CD8-positive, alpha-beta T cell (primary cell): ENCODE measurements at regions of chr17 and their contacts with region 1.

Region 1: DNA sequence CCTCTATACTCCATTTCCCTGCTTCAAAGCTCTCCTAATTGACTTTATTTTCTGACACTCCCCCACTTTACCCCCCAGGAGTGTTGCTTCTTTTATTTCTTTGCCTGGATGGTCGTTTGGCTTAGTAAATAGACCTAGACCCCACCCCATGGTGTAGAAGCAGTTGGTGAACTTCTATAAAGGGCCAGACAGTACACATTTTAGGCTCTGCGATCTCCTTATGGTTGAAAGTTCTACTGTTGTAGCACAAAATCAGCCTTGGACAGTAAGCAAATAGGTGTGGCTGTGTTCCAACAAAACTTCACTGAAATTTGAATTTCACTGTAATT is 31.9 kb downstream of the ZNF287 start:
- DNase-seq: no peak
- ATAC-seq: no peak
- H3K4me3 ChIP-seq: no peak overlapping the region
- H3K4me3 Mint-ChIP-seq: peak overlapping the region; percentile 96
- H3K27ac ChIP-seq: peak overlapping the region in 1 of 2 experiments; percentile 45
- H3K27ac Mint-ChIP-seq: peak overlapping the region; percentile 96
- H3K4me1 ChIP-seq: peaks cover 9% of the 10 kb centered on the region
- H3K4me1 Mint-ChIP-seq: peaks cover 21% of the 10 kb centered on the region
- H3K27me3 ChIP-seq: no peaks in the 10 kb centered on the region
- H3K27me3 Mint-ChIP-seq: peaks cover 2% of the 10 kb centered on the region
- CTCF ChIP-seq: no peak

Region 2: GRCh38 chr17:16285957-16286640 is 251.0 kb before region 1 on chr17:
- CTCF ChIA-PET with region 1: no interaction called
- POLR2A ChIA-PET with region 1: interaction called, 3 read pairs
- intact Hi-C with region 1: loop called in 1 of 2 experiments (anchors 1 kb)
- DNase-seq: peak; percentile 48 to 91 (median 77)
- ATAC-seq: peak; percentile 93
- H3K4me3 ChIP-seq: peak overlapping the region; percentile 19 to 27
- H3K4me3 Mint-ChIP-seq: peak overlapping the region; percentile 75
- H3K27ac ChIP-seq: peak overlapping the region; percentile 60 to 86
- H3K27ac Mint-ChIP-seq: peak overlapping the region; percentile 99
- H3K4me1 ChIP-seq: peaks cover 49% of the 10 kb centered on the region
- H3K4me1 Mint-ChIP-seq: peaks cover 53% of the 10 kb centered on the region
- H3K27me3 ChIP-seq: no peaks in the 10 kb centered on the region
- H3K27me3 Mint-ChIP-seq: no peaks in the 10 kb centered on the region
- CTCF ChIP-seq: peak; percentile 37

Region 3: DNA sequence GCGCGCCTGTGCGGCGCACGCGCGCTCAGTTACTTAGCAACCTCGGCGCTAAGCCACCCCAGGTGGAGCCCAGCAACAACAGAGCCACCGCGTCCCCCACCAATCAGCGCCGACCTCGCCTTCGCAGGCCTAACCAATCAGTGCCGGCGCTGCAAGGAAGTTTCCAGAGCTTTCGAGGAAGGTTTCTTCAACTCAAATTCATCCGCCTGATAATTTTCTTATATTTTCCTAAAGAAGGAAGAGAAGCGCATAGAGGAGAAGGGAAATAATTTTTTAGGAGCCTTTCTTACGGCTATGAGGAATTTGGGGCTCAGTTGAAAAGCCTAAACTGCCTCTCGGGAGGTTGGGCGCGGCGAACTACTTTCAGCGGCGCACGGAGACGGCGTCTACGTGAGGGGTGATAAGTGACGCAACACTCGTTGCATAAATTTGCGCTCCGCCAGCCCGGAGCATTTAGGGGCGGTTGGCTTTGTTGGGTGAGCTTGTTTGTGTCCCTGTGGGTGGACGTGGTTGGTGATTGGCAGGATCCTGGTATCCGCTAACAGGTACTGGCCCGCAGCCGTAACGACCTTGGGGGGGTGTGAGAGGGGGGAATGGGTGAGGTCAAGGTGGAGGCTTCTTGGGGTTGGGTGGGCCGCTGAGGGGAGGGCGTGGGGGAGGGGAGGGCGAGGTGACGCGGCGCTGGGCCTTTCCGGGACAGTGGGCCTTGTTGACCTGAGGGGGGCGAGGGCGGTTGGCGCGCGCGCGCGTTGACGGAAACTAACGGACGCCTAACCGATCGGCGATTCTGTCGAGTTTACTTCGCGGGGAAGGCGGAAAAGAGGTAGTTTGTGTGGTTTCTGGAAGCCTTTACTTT is 156.2 kb before region 1 on chr17 and contains the start of gene UBB:
- CTCF ChIA-PET with region 1: no interaction called
- POLR2A ChIA-PET with region 1: interaction called, 12 read pairs
- intact Hi-C with region 1: loop called (anchors 1 kb)
- DNase-seq: peak; percentile 88 to 99 (median 94)
- ATAC-seq: peak; percentile 91
- H3K4me3 ChIP-seq: peak within 1 kb of the TSS; percentile 77 to 79
- H3K4me3 Mint-ChIP-seq: peak within 1 kb of the TSS; percentile 85
- H3K27ac ChIP-seq: peak within 1 kb of the TSS; percentile 89 to 99
- H3K27ac Mint-ChIP-seq: peak within 1 kb of the TSS; percentile 96
- H3K4me1 ChIP-seq: peaks cover 29% of the 10 kb centered on the region
- H3K4me1 Mint-ChIP-seq: peaks cover 36% of the 10 kb centered on the region
- H3K27me3 ChIP-seq: no peaks in the 10 kb centered on the region
- H3K27me3 Mint-ChIP-seq: no peaks in the 10 kb centered on the region
- CTCF ChIP-seq: no peak
- total RNA-seq, gene UBB: 829 to 863 TPM

Region 4: GRCh38 chr17:16491703-16492612 is 45.1 kb before region 1 on chr17 and contains the start of gene LRRC75A:
- CTCF ChIA-PET with region 1: no interaction called
- POLR2A ChIA-PET with region 1: no interaction called
- intact Hi-C with region 1: loop called (anchors 1 kb)
- DNase-seq: peak; percentile 18 to 83 (median 50)
- ATAC-seq: peak; percentile 88
- H3K4me3 ChIP-seq: peak within 1 kb of the TSS; percentile 50 to 56
- H3K4me3 Mint-ChIP-seq: peak within 1 kb of the TSS; percentile 84
- H3K27ac ChIP-seq: no peak within 1 kb of the TSS
- H3K27ac Mint-ChIP-seq: peak within 1 kb of the TSS; percentile 55
- H3K4me1 ChIP-seq: peaks cover 19% of the 10 kb centered on the region
- H3K4me1 Mint-ChIP-seq: peaks cover 19% of the 10 kb centered on the region
- H3K27me3 ChIP-seq: no peaks in the 10 kb centered on the region
- H3K27me3 Mint-ChIP-seq: no peaks in the 10 kb centered on the region
- CTCF ChIP-seq: no peak
- total RNA-seq, gene LRRC75A: 1.7 TPM

Region 5: GRCh38 chr17:16589097-16589969 is 52.2 kb after region 1 on chr17:
- CTCF ChIA-PET with region 1: interaction called, 75 read pairs
- POLR2A ChIA-PET with region 1: interaction called, 12 read pairs
- intact Hi-C with region 1: loop called (anchors 1 kb)
- DNase-seq: peak; percentile 81 to 96 (median 92)
- ATAC-seq: peak; percentile 94
- H3K4me3 ChIP-seq: peak overlapping the region; percentile 62 to 65
- H3K4me3 Mint-ChIP-seq: peak overlapping the region; percentile 79
- H3K27ac ChIP-seq: no peak overlapping the region
- H3K27ac Mint-ChIP-seq: no peak overlapping the region
- H3K4me1 ChIP-seq: peaks cover 12% of the 10 kb centered on the region
- H3K4me1 Mint-ChIP-seq: peaks cover 16% of the 10 kb centered on the region
- H3K27me3 ChIP-seq: no peaks in the 10 kb centered on the region
- H3K27me3 Mint-ChIP-seq: peaks cover 33% of the 10 kb centered on the region
- CTCF ChIP-seq: peak; percentile 95

Region 6: GRCh38 chr17:16991349-16992009 is 454.4 kb after region 1 on chr17:
- CTCF ChIA-PET with region 1: interaction called, 11 read pairs
- POLR2A ChIA-PET with region 1: no interaction called
- intact Hi-C with region 1: loop called in 1 of 2 experiments (anchors 1 kb)
- DNase-seq: peak; percentile 61 to 86 (median 80)
- ATAC-seq: peak; percentile 63
- H3K4me3 ChIP-seq: no peak overlapping the region
- H3K4me3 Mint-ChIP-seq: no peak overlapping the region
- H3K27ac ChIP-seq: peak overlapping the region in 1 of 2 experiments; percentile 79
- H3K27ac Mint-ChIP-seq: peak overlapping the region; percentile 32
- H3K4me1 ChIP-seq: peaks cover 41% of the 10 kb centered on the region
- H3K4me1 Mint-ChIP-seq: peaks cover 31% of the 10 kb centered on the region
- H3K27me3 ChIP-seq: no peaks in the 10 kb centered on the region
- H3K27me3 Mint-ChIP-seq: no peaks in the 10 kb centered on the region
- CTCF ChIP-seq: peak; percentile 73

Region 7: DNA sequence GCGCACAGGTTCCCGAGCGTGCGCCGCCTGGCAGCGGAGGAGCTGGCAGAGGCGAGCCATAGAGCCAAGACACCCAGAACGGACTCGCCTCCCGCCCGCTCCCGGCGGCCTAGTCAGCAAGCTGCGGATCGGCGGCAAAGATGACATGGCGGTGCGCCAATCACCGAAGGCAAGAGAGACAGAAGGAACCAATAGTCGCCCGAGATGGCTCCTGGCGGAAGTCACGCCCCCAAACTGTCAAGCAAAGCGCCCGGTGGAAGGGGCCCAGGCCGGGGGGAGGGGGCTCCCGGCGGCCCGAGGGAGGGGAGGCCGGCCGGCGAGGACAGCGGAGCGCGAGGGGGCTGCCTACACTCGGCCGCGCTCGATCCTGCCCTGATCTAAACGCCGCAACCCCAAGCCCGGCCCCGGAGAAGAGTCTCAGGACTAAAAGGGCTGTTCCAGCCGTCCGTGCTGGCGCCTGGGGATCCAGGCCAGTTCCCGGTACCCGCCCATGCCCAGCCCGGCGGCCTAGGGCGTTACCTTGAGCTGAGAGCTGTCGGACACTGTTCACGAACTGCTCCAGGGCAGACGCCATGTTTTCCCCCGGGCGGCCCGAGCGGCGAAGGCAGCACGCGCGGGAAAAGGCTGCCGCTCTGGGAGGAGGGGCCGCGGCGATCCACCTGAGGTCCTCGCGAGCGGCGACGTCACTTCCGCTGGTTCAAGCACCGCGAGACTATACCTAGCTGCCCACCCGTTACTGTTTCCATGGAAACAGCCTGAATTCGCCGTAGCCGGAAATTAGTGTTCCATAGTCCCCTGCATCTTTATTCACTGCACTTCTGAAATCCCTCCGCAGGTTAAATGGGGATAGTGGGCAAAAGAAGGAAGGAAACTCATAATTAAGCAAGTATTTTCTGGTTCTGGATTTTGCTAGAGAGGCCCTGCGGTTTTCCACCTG is 743.8 kb after region 1 on chr17 and contains the start of gene COPS3:
- CTCF ChIA-PET with region 1: no interaction called
- POLR2A ChIA-PET with region 1: no interaction called
- intact Hi-C with region 1: loop called in 1 of 2 experiments (anchors 5 kb)
- DNase-seq: peak; percentile 91 to 99 (median 97)
- ATAC-seq: peak; percentile 88
- H3K4me3 ChIP-seq: peak within 1 kb of the TSS; percentile 74 to 93
- H3K4me3 Mint-ChIP-seq: peak within 1 kb of the TSS; percentile 96
- H3K27ac ChIP-seq: peak within 1 kb of the TSS; percentile 74 to 92
- H3K27ac Mint-ChIP-seq: peak within 1 kb of the TSS; percentile 87
- H3K4me1 ChIP-seq: peaks cover 26% of the 10 kb centered on the region
- H3K4me1 Mint-ChIP-seq: peaks cover 38% of the 10 kb centered on the region
- H3K27me3 ChIP-seq: no peaks in the 10 kb centered on the region
- H3K27me3 Mint-ChIP-seq: no peaks in the 10 kb centered on the region
- CTCF ChIP-seq: no peak
- total RNA-seq, gene COPS3: 94.1 to 96.3 TPM